ENCODE measurements at regions of chr9 and their contacts with region 1.

Region 1: DNA sequence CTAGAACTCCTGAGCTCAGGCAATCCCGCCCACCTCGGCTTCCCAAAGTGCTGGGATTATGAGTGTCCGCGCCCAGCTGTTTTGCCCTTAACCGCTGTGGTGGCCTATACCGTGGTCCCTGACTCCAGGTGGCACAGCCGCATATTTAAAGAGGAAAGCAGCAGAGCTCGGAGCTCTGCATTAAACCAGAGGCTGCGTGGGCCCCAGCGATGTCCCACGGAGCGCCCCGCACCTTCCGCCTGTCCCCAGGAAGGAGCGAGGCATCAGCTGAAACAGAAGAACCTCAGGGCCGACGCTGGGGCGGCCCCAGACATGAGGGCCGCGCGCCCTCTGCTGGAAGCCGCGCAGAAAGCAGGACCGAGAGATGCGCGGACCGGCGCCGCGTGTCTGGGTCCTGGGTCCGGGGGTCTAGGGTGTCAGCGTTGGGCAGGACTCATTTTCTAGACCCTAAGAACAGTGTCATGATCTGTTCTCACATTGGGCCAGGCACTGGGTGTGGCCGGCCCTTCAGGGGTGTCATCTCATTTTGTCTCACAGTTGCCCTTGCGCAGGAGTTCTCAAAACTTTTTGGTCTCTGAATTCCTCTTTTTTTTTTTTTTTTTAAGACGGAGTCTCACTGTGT is 37.7 kb downstream of the LAMC3 start:
- DNase-seq: peak in 1 of 2 donors; percentile 64
- H3K4me3 ChIP-seq: peak overlapping the region in 1 of 2 donors; percentile 18
- H3K27ac ChIP-seq: no peak overlapping the region
- H3K4me1 ChIP-seq: peaks cover 0 to 4% (median 0%) of the 10 kb centered on the region in 4 donors
- H3K27me3 ChIP-seq: no peaks in the 10 kb centered on the region
- CTCF ChIP-seq: peak; percentile 89 to 91

Region 2: DNA sequence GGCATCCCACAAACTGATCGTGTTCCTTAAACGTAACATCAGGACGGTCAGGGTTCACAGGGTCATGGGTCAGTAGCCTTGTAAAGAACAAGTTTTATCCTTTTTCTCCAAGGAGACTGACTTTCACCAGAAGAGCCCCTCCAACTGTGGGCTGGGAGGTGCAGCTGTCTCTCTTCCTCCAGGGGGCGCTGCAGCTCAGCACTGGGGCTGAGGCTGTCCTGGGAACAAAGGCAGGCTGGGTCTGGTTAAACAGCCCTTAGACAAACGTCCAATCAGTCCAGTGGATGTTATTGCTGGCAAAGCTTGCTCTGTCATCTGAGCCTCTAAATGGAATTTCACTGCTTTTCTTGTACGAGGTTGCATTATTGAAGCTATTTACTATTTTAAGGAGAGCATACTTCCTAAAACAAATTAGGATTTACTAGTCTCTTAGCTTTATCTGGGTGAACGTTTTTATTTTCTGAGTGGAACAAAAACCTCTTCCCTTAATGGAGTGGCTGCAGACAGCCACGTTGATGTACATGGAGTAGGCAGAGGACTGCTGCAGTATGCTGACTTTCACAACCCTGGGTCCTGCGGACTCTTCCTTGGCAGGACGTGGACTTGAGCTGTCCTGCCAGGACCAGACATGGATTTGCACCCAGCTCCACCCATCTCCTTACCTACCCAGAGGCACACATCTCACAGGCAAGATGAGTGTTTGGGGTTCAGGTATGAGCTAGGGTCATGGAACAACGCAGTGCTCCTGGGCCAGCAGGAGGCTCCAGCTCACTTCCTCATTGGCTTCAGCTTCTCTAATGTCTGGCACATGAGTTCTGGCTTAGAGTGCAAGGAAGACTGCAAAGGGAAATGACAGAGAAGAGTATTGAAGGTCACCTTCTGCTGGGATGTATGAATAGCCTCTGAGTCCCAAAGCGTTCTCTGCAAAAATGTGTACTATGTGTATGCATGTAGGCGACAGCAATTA is 345.4 kb before region 1 on chr9:
- intact Hi-C with region 1: loop called (anchors 5 kb)
- DNase-seq: peak; percentile 71 to 86
- H3K4me3 ChIP-seq: no peak overlapping the region
- H3K27ac ChIP-seq: peak overlapping the region; percentile 35 to 41
- H3K4me1 ChIP-seq: peaks cover 0 to 15% (median 7%) of the 10 kb centered on the region in 4 donors
- H3K27me3 ChIP-seq: no peaks in the 10 kb centered on the region
- CTCF ChIP-seq: peak; percentile 89 to 94

Region 3: GRCh38 chr9:131068076-131068816 is 21.6 kb after region 1 on chr9:
- intact Hi-C with region 1: no loop called
- DNase-seq: no peak
- H3K4me3 ChIP-seq: no peak overlapping the region
- H3K27ac ChIP-seq: no peak overlapping the region
- H3K4me1 ChIP-seq: no peaks in the 10 kb centered on the region
- H3K27me3 ChIP-seq: peaks cover 0 to 33% of the 10 kb centered on the region in 2 donors
- CTCF ChIP-seq: no peak

Region 4: DNA sequence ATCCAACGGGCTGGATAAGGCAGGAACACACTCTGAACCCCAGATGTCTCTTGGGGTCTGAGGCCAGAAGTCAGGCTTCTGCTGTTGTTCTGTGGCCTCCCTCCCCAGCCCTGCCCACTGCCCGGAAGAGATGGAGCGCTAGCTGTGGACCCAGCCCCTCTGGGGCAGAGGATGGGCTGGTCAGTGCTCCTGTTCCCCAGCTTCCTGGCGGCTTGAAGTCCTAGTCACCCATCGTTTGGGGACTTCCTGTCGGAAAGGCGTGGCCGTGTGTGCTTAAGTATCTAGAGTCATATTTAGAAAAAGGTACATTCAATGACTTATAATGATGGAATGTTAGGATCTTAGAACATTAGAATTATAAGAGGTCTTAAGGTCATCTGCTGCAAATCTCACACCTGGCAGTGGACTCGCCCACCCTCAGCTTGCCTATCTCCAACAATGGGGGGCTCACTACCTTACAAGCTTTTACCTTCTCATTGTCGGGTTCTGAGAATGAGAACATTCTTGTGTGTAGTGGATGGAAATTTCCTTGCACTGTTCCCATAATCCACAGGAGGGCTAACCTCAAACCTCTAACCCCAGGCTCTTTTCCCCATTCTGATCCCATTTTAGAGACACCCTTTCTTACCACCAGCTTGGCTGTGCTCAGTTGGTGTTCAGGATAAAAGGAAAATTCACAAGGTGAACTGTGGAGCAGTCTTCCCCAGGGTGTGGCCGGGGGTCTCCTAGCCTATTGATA is 36.3 kb after region 1 on chr9:
- intact Hi-C with region 1: no loop called
- DNase-seq: no peak
- H3K4me3 ChIP-seq: no peak overlapping the region
- H3K27ac ChIP-seq: no peak overlapping the region
- H3K4me1 ChIP-seq: no peaks in the 10 kb centered on the region
- H3K27me3 ChIP-seq: peaks cover 0 to 4% of the 10 kb centered on the region in 2 donors
- CTCF ChIP-seq: no peak

Measured in tibial artery (tissue), 4 donors.